ENCODE measurements at regions of chr6 and their contacts with region 1.

Region 1: DNA sequence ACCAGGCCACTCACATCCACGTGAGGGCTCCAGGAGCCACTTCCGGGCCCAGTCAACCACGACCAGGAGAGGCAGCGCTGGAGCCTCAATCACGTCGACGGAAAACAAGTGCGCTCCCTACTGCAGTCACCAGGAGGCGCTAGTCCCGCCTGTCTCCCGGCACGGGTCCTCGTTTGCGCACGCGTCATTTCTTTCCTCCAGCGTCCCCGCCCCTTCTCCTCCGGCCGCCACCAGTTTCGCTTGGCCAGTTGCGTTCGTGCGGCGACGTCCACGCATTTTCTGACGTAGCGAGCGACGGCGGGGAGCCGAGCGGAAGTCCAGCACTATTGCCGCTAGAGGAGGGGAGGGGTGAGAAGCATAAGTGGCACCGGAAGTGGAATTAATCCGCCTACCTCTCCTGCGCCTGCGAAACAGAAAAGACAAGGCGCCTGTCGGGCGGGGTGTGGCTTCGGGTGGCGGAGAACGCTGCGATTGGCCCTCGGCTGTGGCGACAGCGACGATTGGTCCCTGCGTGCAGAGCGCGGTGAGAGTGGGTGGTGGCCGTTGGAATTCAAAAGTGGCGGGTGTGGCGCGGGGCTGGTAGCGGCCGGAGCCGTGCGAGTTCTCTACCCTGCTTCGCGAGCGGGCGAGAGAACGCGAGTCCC is at the start of gene KIFC1:
- DNase-seq: peak; percentile 100
- ATAC-seq: peak; percentile 85
- H3K4me3 ChIP-seq: peak within 1 kb of the TSS; percentile 54 to 73 (median 59)
- H3K4me3 Mint-ChIP-seq: peak within 1 kb of the TSS; percentile 80
- H3K27ac ChIP-seq: peak within 1 kb of the TSS; percentile 88
- H3K27ac Mint-ChIP-seq: peak within 1 kb of the TSS; percentile 95
- H3K4me1 ChIP-seq: peaks cover 12 to 18% of the 10 kb centered on the region in 2 donors
- H3K4me1 Mint-ChIP-seq: peaks cover 23% of the 10 kb centered on the region
- H3K27me3 ChIP-seq: no peaks in the 10 kb centered on the region
- H3K27me3 Mint-ChIP-seq: no peaks in the 10 kb centered on the region
- CTCF ChIP-seq: peak; percentile 88
- total RNA-seq, gene KIFC1: 0.70 and 0.79 TPM in 2 replicates

Region 2: GRCh38 chr6:33271458-33272274 is 119.7 kb before region 1 on chr6 and contains the starts of genes RPS18 and VPS52:
- CTCF ChIA-PET with region 1: interaction called, 5 read pairs
- POLR2A ChIA-PET with region 1: interaction called, 4 read pairs
- intact Hi-C with region 1: loop called (anchors 1 kb)
- DNase-seq: peak; percentile 99
- ATAC-seq: peak; percentile 86
- H3K4me3 ChIP-seq: peak within 1 kb of the TSS; percentile 81 to 95 (median 86)
- H3K4me3 Mint-ChIP-seq: peak within 1 kb of the TSS; percentile 94
- H3K27ac ChIP-seq: peak within 1 kb of the TSS; percentile 89 to 94
- H3K27ac Mint-ChIP-seq: peak within 1 kb of the TSS; percentile 99
- H3K4me1 ChIP-seq: peaks cover 47 to 54% of the 10 kb centered on the region in 2 donors
- H3K4me1 Mint-ChIP-seq: peaks cover 62% of the 10 kb centered on the region
- H3K27me3 ChIP-seq: no peaks in the 10 kb centered on the region
- H3K27me3 Mint-ChIP-seq: no peaks in the 10 kb centered on the region
- CTCF ChIP-seq: no peak
- total RNA-seq, gene RPS18: 3,593 and 3,830 TPM in 2 replicates
- total RNA-seq, gene VPS52: 100 and 108 TPM in 2 replicates

Region 3: GRCh38 chr6:33323623-33323948 is 67.8 kb before region 1 on chr6:
- CTCF ChIA-PET with region 1: interaction called, 8 read pairs
- POLR2A ChIA-PET with region 1: no interaction called
- intact Hi-C with region 1: loop called (anchors 1 kb)
- DNase-seq: no peak
- ATAC-seq: no peak
- H3K4me3 ChIP-seq: peak overlapping the region; percentile 72 to 93 (median 85)
- H3K4me3 Mint-ChIP-seq: peak overlapping the region; percentile 91
- H3K27ac ChIP-seq: peak overlapping the region; percentile 85 to 95
- H3K27ac Mint-ChIP-seq: peak overlapping the region; percentile 93
- H3K4me1 ChIP-seq: peaks cover 43 to 63% of the 10 kb centered on the region in 2 donors
- H3K4me1 Mint-ChIP-seq: peaks cover 59% of the 10 kb centered on the region
- H3K27me3 ChIP-seq: no peaks in the 10 kb centered on the region
- H3K27me3 Mint-ChIP-seq: no peaks in the 10 kb centered on the region
- CTCF ChIP-seq: no peak

Region 4: GRCh38 chr6:33417903-33418689 is 26.7 kb after region 1 on chr6 and contains the start of gene CUTA:
- CTCF ChIA-PET with region 1: interaction called, 5 read pairs
- POLR2A ChIA-PET with region 1: no interaction called
- intact Hi-C with region 1: loop called (anchors 1 kb)
- DNase-seq: peak; percentile 100
- ATAC-seq: peak; percentile 89
- H3K4me3 ChIP-seq: peak within 1 kb of the TSS; percentile 58 to 84 (median 69)
- H3K4me3 Mint-ChIP-seq: peak within 1 kb of the TSS; percentile 96
- H3K27ac ChIP-seq: peak within 1 kb of the TSS; percentile 89 to 93
- H3K27ac Mint-ChIP-seq: peak within 1 kb of the TSS; percentile 97
- H3K4me1 ChIP-seq: peaks cover 40 to 65% of the 10 kb centered on the region in 2 donors
- H3K4me1 Mint-ChIP-seq: peaks cover 63% of the 10 kb centered on the region
- H3K27me3 ChIP-seq: peaks cover 0 to 3% (median 0%) of the 10 kb centered on the region in 4 experiments
- H3K27me3 Mint-ChIP-seq: peaks cover 4% of the 10 kb centered on the region
- CTCF ChIP-seq: peak; percentile 28
- total RNA-seq, gene CUTA: 134 and 137 TPM in 2 replicates

Region 5: GRCh38 chr6:33492093-33492492 is 100.7 kb after region 1 on chr6:
- CTCF ChIA-PET with region 1: interaction called, 3 read pairs
- POLR2A ChIA-PET with region 1: no interaction called
- intact Hi-C with region 1: loop called (anchors 1 kb)
- DNase-seq: peak; percentile 41
- ATAC-seq: no peak
- H3K4me3 ChIP-seq: no peak overlapping the region
- H3K4me3 Mint-ChIP-seq: no peak overlapping the region
- H3K27ac ChIP-seq: no peak overlapping the region
- H3K27ac Mint-ChIP-seq: no peak overlapping the region
- H3K4me1 ChIP-seq: no peaks in the 10 kb centered on the region
- H3K4me1 Mint-ChIP-seq: no peaks in the 10 kb centered on the region
- H3K27me3 ChIP-seq: no peaks in the 10 kb centered on the region
- H3K27me3 Mint-ChIP-seq: peaks cover 8% of the 10 kb centered on the region
- CTCF ChIP-seq: no peak

Region 6: DNA sequence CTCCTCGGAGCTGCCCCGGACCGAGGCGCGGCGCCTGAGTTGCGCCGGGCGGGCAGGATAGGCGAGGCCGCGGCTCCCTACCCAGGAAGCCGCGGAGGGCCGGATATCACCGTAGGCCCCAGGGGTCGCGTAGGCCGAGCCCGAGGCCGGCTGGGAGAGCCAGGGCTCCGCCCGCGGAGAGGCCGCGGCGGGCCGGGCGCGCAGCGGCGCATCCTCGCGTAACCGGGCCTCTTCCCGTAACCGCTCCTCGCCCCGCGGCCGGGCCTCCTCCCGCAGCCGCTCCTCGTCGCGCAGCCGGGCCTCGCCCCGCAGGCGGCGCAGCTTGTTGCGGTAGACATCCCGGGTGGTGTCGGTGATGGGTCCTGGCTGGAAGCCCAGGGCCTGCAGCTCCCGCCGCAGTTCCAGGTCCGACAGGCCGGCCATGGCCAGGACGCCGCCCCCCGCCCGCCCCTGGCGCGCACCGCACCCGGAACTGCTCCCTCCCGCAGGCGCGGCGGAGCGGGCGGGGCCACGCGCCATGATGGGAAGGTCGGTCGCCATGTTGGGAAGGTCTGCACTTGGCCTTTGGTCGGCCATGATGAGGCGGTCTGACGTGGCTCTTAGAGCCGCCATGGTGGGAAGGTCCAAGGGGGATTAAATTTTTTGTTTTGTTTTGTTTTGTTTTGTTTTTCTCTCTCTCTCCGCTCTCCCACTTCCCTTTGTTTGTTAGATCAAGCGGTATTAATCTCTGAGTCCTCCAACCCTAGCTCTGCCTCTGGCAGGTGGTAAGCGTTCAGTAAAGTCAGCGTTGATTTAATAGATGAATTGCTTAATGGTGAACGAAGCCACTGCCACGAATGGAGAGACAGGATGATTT is 397.5 kb after region 1 on chr6 and contains the start of gene LEMD2:
- CTCF ChIA-PET with region 1: no interaction called
- POLR2A ChIA-PET with region 1: no interaction called
- intact Hi-C with region 1: loop called (anchors 5 kb)
- DNase-seq: peak; percentile 95
- ATAC-seq: peak; percentile 92
- H3K4me3 ChIP-seq: peak within 1 kb of the TSS; percentile 11 to 89 (median 73)
- H3K4me3 Mint-ChIP-seq: peak within 1 kb of the TSS; percentile 93
- H3K27ac ChIP-seq: peak within 1 kb of the TSS; percentile 78 to 89
- H3K27ac Mint-ChIP-seq: peak within 1 kb of the TSS; percentile 97
- H3K4me1 ChIP-seq: peaks cover 34 to 37% of the 10 kb centered on the region in 2 donors
- H3K4me1 Mint-ChIP-seq: peaks cover 47% of the 10 kb centered on the region
- H3K27me3 ChIP-seq: peaks cover 0 to 5% (median 0%) of the 10 kb centered on the region in 4 experiments
- H3K27me3 Mint-ChIP-seq: peaks cover 4% of the 10 kb centered on the region
- CTCF ChIP-seq: no peak
- total RNA-seq, gene LEMD2: 113 and 122 TPM in 2 replicates